ENCODE measurements at regions of chr2 and their contacts with region 1.

Region 1: DNA sequence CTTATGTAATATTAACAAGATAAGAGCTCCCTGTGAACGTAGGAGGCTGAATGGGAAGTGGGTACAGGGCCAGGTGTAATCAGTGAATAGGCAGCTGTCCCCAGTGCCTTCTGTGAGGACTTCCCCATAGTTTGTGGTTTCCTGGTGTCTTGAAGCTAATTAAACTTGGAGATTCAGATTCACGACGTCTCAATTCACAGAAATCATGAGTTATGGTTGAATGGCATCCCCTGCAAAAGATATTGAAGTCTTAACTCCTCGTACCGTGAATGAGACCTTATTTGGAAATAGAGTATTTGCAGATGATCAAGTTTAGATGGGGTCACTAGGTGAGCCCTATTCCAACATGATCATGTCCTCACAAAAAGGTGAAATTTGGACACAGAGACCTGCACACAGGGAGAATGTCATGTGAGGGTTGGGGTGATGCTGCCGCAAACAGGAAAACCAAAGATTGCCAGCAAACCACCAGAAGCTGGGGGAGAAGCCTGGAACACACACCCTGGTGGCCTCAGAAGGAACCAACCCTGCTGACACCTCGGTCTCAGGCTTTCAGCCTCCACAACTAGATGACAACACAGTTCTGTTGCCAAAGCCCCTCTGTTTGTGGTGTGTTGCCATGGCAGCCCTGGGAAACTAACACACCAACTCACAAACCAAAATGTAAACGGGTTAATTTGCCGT is 13.2 kb downstream of the ARL4C start:
- DNase-seq: peak; percentile 62 to 96 (median 78)
- ATAC-seq: peak; percentile 76
- H3K4me3 ChIP-seq: peak overlapping the region; percentile 19
- H3K4me3 Mint-ChIP-seq: peak overlapping the region; percentile 68
- H3K27ac ChIP-seq: peak overlapping the region; percentile 68 to 81
- H3K27ac Mint-ChIP-seq: peak overlapping the region; percentile 98
- H3K4me1 ChIP-seq: peaks cover 74% of the 10 kb centered on the region
- H3K4me1 Mint-ChIP-seq: peaks cover 94% of the 10 kb centered on the region
- H3K27me3 ChIP-seq: no peaks in the 10 kb centered on the region
- H3K27me3 Mint-ChIP-seq: no peaks in the 10 kb centered on the region
- CTCF ChIP-seq: peak; percentile 80

Region 2: GRCh38 chr2:234446404-234447076 is 37.2 kb before region 1 on chr2:
- CTCF ChIA-PET with region 1: interaction called, 4 read pairs
- POLR2A ChIA-PET with region 1: interaction called, 88 read pairs
- intact Hi-C with region 1: loop called in 1 of 2 experiments (anchors 5 kb)
- DNase-seq: peak; percentile 61 to 96 (median 74)
- ATAC-seq: peak; percentile 81
- H3K4me3 ChIP-seq: peak overlapping the region; percentile 18
- H3K4me3 Mint-ChIP-seq: peak overlapping the region; percentile 57
- H3K27ac ChIP-seq: peak overlapping the region; percentile 85 to 93
- H3K27ac Mint-ChIP-seq: peak overlapping the region; percentile 92
- H3K4me1 ChIP-seq: peaks cover 74% of the 10 kb centered on the region
- H3K4me1 Mint-ChIP-seq: peaks cover 86% of the 10 kb centered on the region
- H3K27me3 ChIP-seq: no peaks in the 10 kb centered on the region
- H3K27me3 Mint-ChIP-seq: no peaks in the 10 kb centered on the region
- CTCF ChIP-seq: no peak

Region 3: GRCh38 chr2:234494361-234495250 is 10.9 kb after region 1 on chr2:
- CTCF ChIA-PET with region 1: interaction called, 4 read pairs
- POLR2A ChIA-PET with region 1: interaction called, 33 read pairs
- intact Hi-C with region 1: no loop called
- DNase-seq: peak in 8 of 14 experiments; percentile 21 to 80 (median 46)
- ATAC-seq: peak; percentile 33
- H3K4me3 ChIP-seq: peak overlapping the region; percentile 94
- H3K4me3 Mint-ChIP-seq: peak overlapping the region; percentile 98
- H3K27ac ChIP-seq: peak overlapping the region; percentile 70 to 96
- H3K27ac Mint-ChIP-seq: peak overlapping the region; percentile 98
- H3K4me1 ChIP-seq: peaks cover 42% of the 10 kb centered on the region
- H3K4me1 Mint-ChIP-seq: peaks cover 65% of the 10 kb centered on the region
- H3K27me3 ChIP-seq: no peaks in the 10 kb centered on the region
- H3K27me3 Mint-ChIP-seq: peaks cover 5% of the 10 kb centered on the region
- CTCF ChIP-seq: no peak

Region 4: DNA sequence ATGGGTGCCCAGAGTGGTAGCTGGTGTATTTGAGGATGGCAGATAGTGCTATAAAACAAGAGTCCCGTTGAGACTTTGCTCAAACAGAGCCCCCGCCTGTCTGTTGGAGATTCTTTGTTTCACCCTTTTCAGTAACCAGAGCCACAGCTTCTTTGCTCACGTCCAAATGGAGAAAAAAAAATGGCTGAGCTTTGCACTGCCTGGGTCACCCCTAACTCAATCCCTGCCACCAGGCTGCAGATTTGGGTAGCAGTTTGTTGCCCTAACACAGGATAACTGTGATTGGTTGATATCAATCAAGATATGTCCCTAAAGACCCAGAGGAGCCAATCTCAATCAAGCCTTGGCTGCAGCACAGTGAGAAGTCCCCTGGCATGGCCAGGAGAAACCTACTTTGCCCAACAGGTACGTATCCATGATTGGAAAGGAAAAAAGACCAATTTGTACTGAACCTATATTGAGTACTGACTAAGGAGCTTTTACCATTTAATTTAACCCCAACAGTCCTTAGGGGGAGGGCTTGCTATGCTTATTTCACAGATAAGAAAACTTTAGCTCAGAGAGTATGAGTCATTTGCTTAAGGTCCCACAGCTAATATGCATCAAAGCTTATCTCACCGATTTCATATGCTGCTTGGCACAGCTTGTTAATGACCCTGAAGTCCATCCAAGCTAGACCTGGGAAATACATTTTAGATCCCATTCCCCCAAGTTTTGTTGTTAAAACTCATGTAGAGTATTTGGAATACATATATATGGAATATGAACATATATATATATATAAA is 396.2 kb after region 1 on chr2:
- CTCF ChIA-PET with region 1: no interaction called
- POLR2A ChIA-PET with region 1: no interaction called
- intact Hi-C with region 1: no loop called
- DNase-seq: no peak
- ATAC-seq: no peak
- H3K4me3 ChIP-seq: no peak overlapping the region
- H3K4me3 Mint-ChIP-seq: no peak overlapping the region
- H3K27ac ChIP-seq: no peak overlapping the region
- H3K27ac Mint-ChIP-seq: no peak overlapping the region
- H3K4me1 ChIP-seq: no peaks in the 10 kb centered on the region
- H3K4me1 Mint-ChIP-seq: no peaks in the 10 kb centered on the region
- H3K27me3 ChIP-seq: no peaks in the 10 kb centered on the region
- H3K27me3 Mint-ChIP-seq: peaks cover 17% of the 10 kb centered on the region
- CTCF ChIP-seq: no peak

Measured in CD4-positive, alpha-beta T cell (primary cell).